B cell (primary cell): ENCODE measurements at regions of chr6 and their contacts with region 1.

Region 1: DNA sequence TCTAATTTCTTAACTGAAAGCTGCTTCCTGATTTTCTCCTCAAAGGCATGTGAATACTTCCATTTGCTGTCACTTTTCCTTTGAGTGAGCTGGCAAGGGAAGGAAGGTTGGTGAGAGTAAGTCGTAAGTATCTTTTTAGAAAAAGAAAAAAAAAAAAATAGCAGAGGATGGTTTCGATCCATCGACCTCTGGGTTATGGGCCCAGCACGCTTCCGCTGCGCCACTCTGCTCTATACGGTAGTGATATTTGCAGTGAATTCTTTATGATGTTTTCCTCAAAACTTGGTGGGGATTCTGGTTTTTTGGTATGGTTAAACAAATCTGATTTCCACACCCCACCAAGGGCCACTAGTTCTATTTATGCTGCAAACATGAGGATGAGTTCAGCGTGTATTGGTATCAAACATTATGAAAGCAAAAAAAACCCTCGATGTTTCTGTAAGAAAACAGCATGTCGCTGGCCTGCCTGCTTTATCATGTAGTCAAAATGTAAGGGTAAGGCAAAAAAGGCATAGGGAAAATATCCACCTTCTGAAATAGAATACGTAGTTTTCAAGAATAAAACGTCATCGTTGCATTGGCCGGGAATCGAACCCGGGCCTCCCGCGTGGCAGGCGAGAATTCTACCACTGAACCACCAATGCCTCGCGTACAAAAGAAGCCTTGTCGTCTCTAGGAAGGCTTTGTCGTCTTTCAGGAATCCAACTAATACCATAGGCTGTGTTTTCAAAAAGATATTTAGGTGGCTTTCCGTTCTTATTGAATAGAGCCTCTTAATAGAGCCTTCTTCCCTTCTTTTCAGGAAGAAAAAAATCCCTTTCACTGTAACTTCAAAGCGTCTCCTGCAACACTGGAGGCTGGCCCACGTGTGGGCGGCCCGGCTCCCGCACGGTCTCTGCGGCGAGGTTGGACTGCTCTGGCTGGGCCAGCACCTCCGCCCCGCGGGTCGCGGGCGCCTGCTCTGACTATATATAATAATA is 9.6 kb downstream of the OR2B2 start:
- DNase-seq: peak; percentile 94
- ATAC-seq: peak; percentile 84
- H3K4me3 ChIP-seq: peak overlapping the region; percentile 56 to 91 (median 70)
- H3K4me3 Mint-ChIP-seq: peak overlapping the region; percentile 94
- H3K27ac ChIP-seq: peak overlapping the region; percentile 78 to 95
- H3K27ac Mint-ChIP-seq: peak overlapping the region; percentile 99
- H3K4me1 ChIP-seq: peaks cover 0 to 8% of the 10 kb centered on the region in 2 donors
- H3K4me1 Mint-ChIP-seq: peaks cover 7% of the 10 kb centered on the region
- H3K27me3 ChIP-seq: no peaks in the 10 kb centered on the region
- H3K27me3 Mint-ChIP-seq: peaks cover 7% of the 10 kb centered on the region
- CTCF ChIP-seq: no peak

Region 2: GRCh38 chr6:27518881-27519795 is 383.5 kb before region 1 on chr6:
- CTCF ChIA-PET with region 1: no interaction called
- POLR2A ChIA-PET with region 1: no interaction called
- intact Hi-C with region 1: loop called (anchors 2 kb)
- DNase-seq: peak; percentile 87
- ATAC-seq: peak; percentile 67
- H3K4me3 ChIP-seq: peak overlapping the region; percentile 67 to 89 (median 76)
- H3K4me3 Mint-ChIP-seq: peak overlapping the region; percentile 85
- H3K27ac ChIP-seq: peak overlapping the region; percentile 52 to 69
- H3K27ac Mint-ChIP-seq: peak overlapping the region; percentile 70
- H3K4me1 ChIP-seq: peaks cover 8 to 19% of the 10 kb centered on the region in 2 donors
- H3K4me1 Mint-ChIP-seq: peaks cover 15% of the 10 kb centered on the region
- H3K27me3 ChIP-seq: peaks cover 0 to 18% (median 10%) of the 10 kb centered on the region in 4 experiments
- H3K27me3 Mint-ChIP-seq: peaks cover 22% of the 10 kb centered on the region
- CTCF ChIP-seq: peak; percentile 80

Region 3: GRCh38 chr6:27582928-27583725 is 319.5 kb before region 1 on chr6:
- CTCF ChIA-PET with region 1: no interaction called
- POLR2A ChIA-PET with region 1: no interaction called
- intact Hi-C with region 1: no loop called
- DNase-seq: peak; percentile 13
- ATAC-seq: no peak
- H3K4me3 ChIP-seq: no peak overlapping the region
- H3K4me3 Mint-ChIP-seq: no peak overlapping the region
- H3K27ac ChIP-seq: no peak overlapping the region
- H3K27ac Mint-ChIP-seq: no peak overlapping the region
- H3K4me1 ChIP-seq: peaks cover 0 to 5% of the 10 kb centered on the region in 2 donors
- H3K4me1 Mint-ChIP-seq: no peaks in the 10 kb centered on the region
- H3K27me3 ChIP-seq: peaks cover 0 to 48% (median 39%) of the 10 kb centered on the region in 4 experiments
- H3K27me3 Mint-ChIP-seq: peaks cover 69% of the 10 kb centered on the region
- CTCF ChIP-seq: no peak

Region 4: DNA sequence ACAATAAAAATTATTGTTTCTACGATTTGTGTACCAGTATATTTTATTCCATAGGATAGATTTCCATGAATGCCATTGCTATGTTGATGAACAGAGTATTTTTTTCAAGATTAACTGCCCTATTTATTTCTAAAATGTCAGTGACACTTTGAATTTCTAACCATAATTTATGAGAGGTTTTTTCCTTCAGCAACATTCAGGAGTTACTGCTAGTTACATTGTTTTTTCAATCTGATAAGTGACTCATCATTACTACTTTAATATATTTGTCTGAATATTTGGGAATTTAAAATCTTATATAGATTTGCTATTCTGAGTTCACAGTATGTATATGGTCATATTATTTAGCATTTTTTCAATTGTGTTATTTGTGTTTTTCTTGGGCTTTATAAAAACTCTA is 48.4 kb after region 1 on chr6:
- CTCF ChIA-PET with region 1: no interaction called
- POLR2A ChIA-PET with region 1: no interaction called
- intact Hi-C with region 1: no loop called
- DNase-seq: no peak
- ATAC-seq: no peak
- H3K4me3 ChIP-seq: no peak overlapping the region
- H3K4me3 Mint-ChIP-seq: no peak overlapping the region
- H3K27ac ChIP-seq: no peak overlapping the region
- H3K27ac Mint-ChIP-seq: no peak overlapping the region
- H3K4me1 ChIP-seq: no peaks in the 10 kb centered on the region
- H3K4me1 Mint-ChIP-seq: no peaks in the 10 kb centered on the region
- H3K27me3 ChIP-seq: peaks cover 0 to 6% (median 1%) of the 10 kb centered on the region in 4 experiments
- H3K27me3 Mint-ChIP-seq: peaks cover 13% of the 10 kb centered on the region
- CTCF ChIP-seq: no peak

Region 5: GRCh38 chr6:28080631-28081485 is 178.2 kb after region 1 on chr6:
- CTCF ChIA-PET with region 1: no interaction called
- POLR2A ChIA-PET with region 1: interaction called, 6 read pairs
- intact Hi-C with region 1: loop called (anchors 1 kb)
- DNase-seq: peak; percentile 98
- ATAC-seq: peak; percentile 67
- H3K4me3 ChIP-seq: peak overlapping the region; percentile 67 to 96 (median 88)
- H3K4me3 Mint-ChIP-seq: peak overlapping the region; percentile 92
- H3K27ac ChIP-seq: peak overlapping the region; percentile 94 to 100
- H3K27ac Mint-ChIP-seq: peak overlapping the region; percentile 98
- H3K4me1 ChIP-seq: peaks cover 10 to 22% of the 10 kb centered on the region in 2 donors
- H3K4me1 Mint-ChIP-seq: peaks cover 36% of the 10 kb centered on the region
- H3K27me3 ChIP-seq: no peaks in the 10 kb centered on the region
- H3K27me3 Mint-ChIP-seq: no peaks in the 10 kb centered on the region
- CTCF ChIP-seq: no peak

Region 6: GRCh38 chr6:28218271-28219248 is 315.9 kb after region 1 on chr6:
- CTCF ChIA-PET with region 1: no interaction called
- POLR2A ChIA-PET with region 1: no interaction called
- intact Hi-C with region 1: loop called (anchors 10 kb)
- DNase-seq: peak; percentile 48
- ATAC-seq: peak; percentile 78
- H3K4me3 ChIP-seq: peak overlapping the region; percentile 32 to 79 (median 64)
- H3K4me3 Mint-ChIP-seq: peak overlapping the region; percentile 93
- H3K27ac ChIP-seq: peak overlapping the region in 1 of 2 donors; percentile 17
- H3K27ac Mint-ChIP-seq: peak overlapping the region; percentile 78
- H3K4me1 ChIP-seq: peaks cover 5 to 6% of the 10 kb centered on the region in 2 donors
- H3K4me1 Mint-ChIP-seq: peaks cover 6% of the 10 kb centered on the region
- H3K27me3 ChIP-seq: peaks cover 0 to 50% (median 35%) of the 10 kb centered on the region in 4 experiments
- H3K27me3 Mint-ChIP-seq: peaks cover 54% of the 10 kb centered on the region
- CTCF ChIP-seq: no peak

Region 7: GRCh38 chr6:28940858-28941680 is 1038.4 kb after region 1 on chr6:
- CTCF ChIA-PET with region 1: no interaction called
- POLR2A ChIA-PET with region 1: no interaction called
- intact Hi-C with region 1: loop called (anchors 5 kb)
- DNase-seq: peak; percentile 90
- ATAC-seq: peak; percentile 70
- H3K4me3 ChIP-seq: peak overlapping the region; percentile 55 to 99 (median 83)
- H3K4me3 Mint-ChIP-seq: peak overlapping the region; percentile 95
- H3K27ac ChIP-seq: peak overlapping the region; percentile 46 to 69
- H3K27ac Mint-ChIP-seq: peak overlapping the region; percentile 92
- H3K4me1 ChIP-seq: peaks cover 29 to 39% of the 10 kb centered on the region in 2 donors
- H3K4me1 Mint-ChIP-seq: peaks cover 44% of the 10 kb centered on the region
- H3K27me3 ChIP-seq: peaks cover 0 to 4% (median 0%) of the 10 kb centered on the region in 4 experiments
- H3K27me3 Mint-ChIP-seq: no peaks in the 10 kb centered on the region
- CTCF ChIP-seq: no peak